ENCODE measurements at regions of chr3 and their contacts with region 1.

Region 1: GRCh38 chr3:36957862-36958686 is 13.2 kb upstream of the TRANK1 start:
- DNase-seq: peak; percentile 95
- H3K4me3 ChIP-seq: peak overlapping the region; percentile 17 to 45 (median 32)
- H3K27ac ChIP-seq: peak overlapping the region; percentile 99
- H3K4me1 ChIP-seq: peaks cover 17% of the 10 kb centered on the region
- H3K27me3 ChIP-seq: no peaks in the 10 kb centered on the region
- CTCF ChIP-seq: no peak

Region 2: GRCh38 chr3:36741285-36741684 is 216.8 kb before region 1 on chr3:
- CTCF ChIA-PET with region 1: interaction called, 10 read pairs
- dilution Hi-C with region 1: no loop called
- in situ Hi-C with region 1: no loop called
- intact Hi-C with region 1: no loop called
- DNase-seq: peak; percentile 8
- H3K4me3 ChIP-seq: no peak overlapping the region
- H3K27ac ChIP-seq: no peak overlapping the region
- H3K4me1 ChIP-seq: no peaks in the 10 kb centered on the region
- H3K27me3 ChIP-seq: no peaks in the 10 kb centered on the region
- CTCF ChIP-seq: peak; percentile 19 to 38

Region 3: GRCh38 chr3:36843065-36844051 is 114.7 kb before region 1 on chr3:
- CTCF ChIA-PET with region 1: no interaction called
- dilution Hi-C with region 1: no loop called
- in situ Hi-C with region 1: no loop called
- intact Hi-C with region 1: loop called (anchors 1 kb)
- DNase-seq: peak; percentile 20
- H3K4me3 ChIP-seq: no peak overlapping the region
- H3K27ac ChIP-seq: no peak overlapping the region
- H3K4me1 ChIP-seq: no peaks in the 10 kb centered on the region
- H3K27me3 ChIP-seq: peaks cover 2% of the 10 kb centered on the region
- CTCF ChIP-seq: peak; percentile 69 to 82

Region 4: DNA sequence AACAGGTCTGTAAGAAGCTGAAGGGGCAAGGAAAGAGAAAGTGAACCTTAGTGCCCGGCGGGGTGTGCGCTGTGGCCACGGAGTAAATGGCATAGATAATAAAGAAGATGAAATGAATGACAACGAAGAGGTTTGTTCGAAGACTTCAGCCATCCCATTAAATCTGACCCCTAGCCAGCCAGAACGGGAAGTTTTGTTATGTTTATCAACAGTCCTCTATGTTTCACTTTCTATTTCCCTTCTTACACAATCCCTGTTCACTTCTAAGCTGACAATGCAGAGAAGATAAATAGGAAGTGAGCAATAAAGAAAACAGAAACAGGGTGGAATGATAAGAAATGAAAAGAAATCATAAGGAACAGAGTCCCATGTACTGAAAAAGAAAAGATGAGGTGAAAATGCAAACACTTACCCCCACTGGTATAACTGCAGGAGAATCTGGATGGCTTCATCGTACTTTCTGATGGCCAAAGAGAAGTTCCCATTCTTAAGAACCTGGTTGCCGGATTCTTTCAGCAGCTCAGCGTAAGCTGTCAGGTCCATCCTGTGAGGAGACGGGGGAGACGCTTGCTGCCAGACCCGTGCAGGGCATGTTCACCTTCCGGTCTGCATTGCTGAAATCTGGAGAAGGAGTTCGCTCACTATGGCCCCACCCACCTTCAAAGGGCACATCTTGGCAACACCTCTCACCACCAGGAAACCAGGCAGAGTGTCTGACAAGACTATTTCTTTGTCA is 50.0 kb before region 1 on chr3:
- CTCF ChIA-PET with region 1: interaction called, 40 read pairs
- dilution Hi-C with region 1: no loop called
- in situ Hi-C with region 1: no loop called
- intact Hi-C with region 1: loop called (anchors 1 kb)
- DNase-seq: peak; percentile 44
- H3K4me3 ChIP-seq: no peak overlapping the region
- H3K27ac ChIP-seq: no peak overlapping the region
- H3K4me1 ChIP-seq: peaks cover 19% of the 10 kb centered on the region
- H3K27me3 ChIP-seq: no peaks in the 10 kb centered on the region
- CTCF ChIP-seq: no peak

Region 5: GRCh38 chr3:36944012-36944640 is 13.9 kb before region 1 on chr3:
- CTCF ChIA-PET with region 1: no interaction called
- dilution Hi-C with region 1: no loop called
- in situ Hi-C with region 1: no loop called
- intact Hi-C with region 1: no loop called
- DNase-seq: peak; percentile 54
- H3K4me3 ChIP-seq: peak overlapping the region; percentile 36 to 54 (median 53)
- H3K27ac ChIP-seq: no peak overlapping the region
- H3K4me1 ChIP-seq: no peaks in the 10 kb centered on the region
- H3K27me3 ChIP-seq: no peaks in the 10 kb centered on the region
- CTCF ChIP-seq: no peak